ENCODE measurements at regions of chr1 and their contacts with region 1.

Region 1: GRCh38 chr1:35882945-35883634 is at the start of gene AGO1:
- DNase-seq: peak; percentile 77
- H3K4me3 ChIP-seq: peak within 1 kb of the TSS; percentile 100
- H3K27ac ChIP-seq: peak within 1 kb of the TSS; percentile 39
- H3K27me3 ChIP-seq: no peaks in the 10 kb centered on the region
- CTCF ChIP-seq: peak; percentile 85
- polyA plus RNA-seq, gene AGO1: 14.8 and 17.6 TPM in 2 replicates

Region 2: DNA sequence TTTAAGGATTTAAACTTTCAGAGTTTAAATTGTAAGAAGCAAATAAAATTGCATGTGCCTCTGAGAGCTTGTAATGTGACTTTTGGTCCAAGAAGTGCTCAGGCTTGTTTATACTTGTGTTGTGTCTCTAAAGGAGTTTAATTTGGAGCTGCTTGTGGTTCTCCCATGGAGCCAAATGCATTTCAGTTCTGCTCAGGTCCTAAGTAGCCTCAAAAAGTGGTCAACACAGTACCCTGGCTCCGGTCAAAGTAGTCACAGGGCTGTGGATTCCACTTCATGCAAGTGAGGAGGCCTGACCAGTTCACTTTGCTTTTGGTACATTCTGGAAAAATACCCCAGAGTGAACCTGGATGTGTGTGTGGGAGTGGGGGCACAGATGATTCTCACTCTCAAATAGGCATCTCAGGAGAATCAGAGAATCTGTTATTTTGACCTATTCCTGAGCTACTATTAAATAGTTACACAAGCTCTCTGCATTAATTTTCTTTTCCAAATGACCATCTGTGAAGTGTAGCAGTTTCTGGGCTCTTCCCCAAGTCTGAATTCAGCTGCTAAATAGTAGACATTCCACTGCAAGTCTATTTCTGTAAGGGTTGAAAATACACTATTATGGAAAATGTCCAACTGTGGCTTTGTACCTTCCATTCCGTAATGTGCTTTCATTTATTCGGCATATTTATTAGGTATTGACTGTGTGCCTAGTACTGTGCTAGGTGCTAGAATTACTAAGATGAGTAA is 31.8 kb before region 1 on chr1:
- CTCF ChIA-PET with region 1: interaction called, 13 read pairs
- POLR2A ChIA-PET with region 1: no interaction called
- DNase-seq: peak; percentile 27
- H3K4me3 ChIP-seq: no peak overlapping the region
- H3K27ac ChIP-seq: no peak overlapping the region
- H3K27me3 ChIP-seq: no peaks in the 10 kb centered on the region
- CTCF ChIP-seq: no peak

Region 3: DNA sequence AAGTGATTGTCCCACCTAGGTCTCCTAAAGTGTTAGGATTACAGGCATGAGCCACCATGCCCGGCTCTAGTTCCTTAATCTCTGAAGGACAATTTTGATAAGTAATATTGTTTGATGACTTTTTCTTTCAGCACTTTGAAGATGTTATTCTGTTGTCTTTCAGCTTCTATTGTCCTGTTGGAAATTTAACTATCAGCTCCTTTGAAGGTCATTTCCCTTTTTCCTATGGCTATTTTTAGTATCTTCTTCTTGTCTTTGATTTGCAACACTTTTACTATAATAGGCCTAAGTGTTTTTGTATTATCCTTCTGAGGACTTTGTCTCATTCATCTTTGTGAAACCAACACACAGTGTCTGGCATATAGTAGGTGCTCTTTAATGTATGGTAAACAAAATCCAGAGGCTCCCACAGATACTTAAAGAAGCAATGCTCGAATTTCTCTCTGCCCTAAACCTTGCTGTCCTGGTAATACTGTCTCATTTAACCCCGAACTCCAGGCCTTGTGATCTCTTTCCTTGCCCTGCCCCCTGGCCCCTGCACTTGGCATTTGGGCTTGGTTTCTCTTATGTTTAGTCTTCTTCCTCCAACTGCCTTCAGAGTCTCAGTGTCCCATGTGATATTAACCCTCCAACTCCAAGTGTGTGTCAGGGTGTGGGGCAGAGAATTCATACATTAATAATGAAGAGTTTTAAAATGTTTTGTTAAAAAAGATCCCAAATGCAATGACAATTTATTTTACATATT is 19.0 kb before region 1 on chr1:
- CTCF ChIA-PET with region 1: interaction called, 11 read pairs
- POLR2A ChIA-PET with region 1: interaction called, 3 read pairs
- DNase-seq: no peak
- H3K4me3 ChIP-seq: no peak overlapping the region
- H3K27ac ChIP-seq: no peak overlapping the region
- H3K27me3 ChIP-seq: no peaks in the 10 kb centered on the region
- CTCF ChIP-seq: no peak

Region 4: GRCh38 chr1:35894183-35894582 is 11.1 kb after region 1 on chr1:
- CTCF ChIA-PET with region 1: interaction called, 16 read pairs
- POLR2A ChIA-PET with region 1: interaction called, 7 read pairs
- DNase-seq: no peak
- H3K4me3 ChIP-seq: no peak overlapping the region
- H3K27ac ChIP-seq: no peak overlapping the region
- H3K27me3 ChIP-seq: no peaks in the 10 kb centered on the region
- CTCF ChIP-seq: no peak

Measured in AG04450 (cell line).